GM18951 (cell line): ENCODE measurements at regions of chr4 and their contacts with region 1.

Region 1: GRCh38 chr4:76067652-76068286 is 6.7 kb upstream of the ART3 start:
- POLR2A ChIP-seq: no peak

Region 2: GRCh38 chr4:76002176-76002575 is 65.6 kb before region 1 on chr4:
- in situ Hi-C with region 1: loop called (anchors 5 kb)
- POLR2A ChIP-seq: no peak

Region 3: DNA sequence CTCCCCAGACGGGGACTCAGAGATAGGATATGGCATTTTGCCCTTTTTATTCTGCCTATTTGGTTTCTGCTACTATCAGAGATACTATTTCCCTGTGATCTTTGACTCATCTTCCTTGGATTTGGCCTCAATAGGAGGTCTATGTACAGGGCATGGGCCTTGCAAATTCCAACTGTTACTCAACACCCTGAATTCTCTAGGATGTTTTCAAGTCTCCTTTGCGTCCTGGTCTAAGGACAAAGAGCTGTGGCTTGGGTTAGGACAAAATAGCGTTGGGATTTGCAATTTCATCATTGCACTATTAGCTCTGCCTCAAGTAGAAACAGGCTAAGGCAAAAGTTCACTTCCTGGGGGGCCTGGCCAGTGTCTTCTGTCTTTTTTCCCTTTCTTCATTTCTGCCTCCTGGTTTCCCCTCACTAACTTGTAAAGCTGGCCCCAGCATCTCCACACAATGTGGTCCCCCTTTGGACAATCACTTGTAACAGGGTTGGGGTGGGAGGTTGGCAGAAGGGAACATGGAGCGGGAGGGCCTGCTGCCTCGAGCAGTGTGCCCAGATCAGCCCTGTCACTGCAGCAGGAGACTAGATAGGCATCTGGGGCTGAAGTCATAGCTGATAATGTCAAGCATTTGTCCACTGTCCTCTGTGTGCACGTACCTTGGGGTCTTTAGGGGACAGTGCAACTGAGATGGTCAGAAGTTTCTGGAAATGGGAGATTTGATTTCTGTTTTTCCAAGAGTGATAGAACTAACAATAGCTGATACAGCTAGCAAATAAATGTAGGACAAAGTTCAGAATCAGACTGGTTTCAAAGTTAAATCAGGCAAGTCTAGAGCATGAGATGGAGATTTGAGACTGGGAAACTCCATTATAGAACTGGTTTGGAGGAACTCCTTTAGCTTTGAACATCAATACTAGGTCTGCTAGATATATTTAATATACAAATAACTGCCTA is 213.0 kb after region 1 on chr4:
- in situ Hi-C with region 1: no loop called
- POLR2A ChIP-seq: no peak